Esophagus squamous epithelium (tissue), 5 donors: ENCODE measurements at regions of chr1 and their contacts with region 1.

Region 1: GRCh38 chr1:202184750-202185460 is 8.7 kb upstream of the LGR6 start:
- DNase-seq: no peak
- H3K4me3 ChIP-seq: no peak overlapping the region
- H3K27ac ChIP-seq: no peak overlapping the region
- H3K4me1 ChIP-seq: peaks cover 0 to 8% (median 0%) of the 10 kb centered on the region in 3 donors
- H3K27me3 ChIP-seq: peaks cover 0 to 96% (median 0%) of the 10 kb centered on the region in 4 donors
- CTCF ChIP-seq: peak; percentile 56 to 83 (median 71)
- POLR2A ChIP-seq: no peak

Region 2: GRCh38 chr1:202264300-202264699 is 79.4 kb after region 1 on chr1:
- intact Hi-C with region 1: no loop called
- DNase-seq: no peak
- H3K4me3 ChIP-seq: no peak overlapping the region
- H3K27ac ChIP-seq: no peak overlapping the region
- H3K4me1 ChIP-seq: peaks cover 0 to 5% (median 0%) of the 10 kb centered on the region in 3 donors
- H3K27me3 ChIP-seq: peaks cover 0 to 74% (median 2%) of the 10 kb centered on the region in 4 donors
- CTCF ChIP-seq: no peak
- POLR2A ChIP-seq: no peak

Region 3: GRCh38 chr1:202315576-202316168 is 130.8 kb after region 1 on chr1:
- intact Hi-C with region 1: loop called (anchors 5 kb)
- DNase-seq: no peak
- H3K4me3 ChIP-seq: no peak overlapping the region
- H3K27ac ChIP-seq: no peak overlapping the region
- H3K4me1 ChIP-seq: peaks cover 0 to 8% (median 3%) of the 10 kb centered on the region in 3 donors
- H3K27me3 ChIP-seq: peaks cover 0 to 81% (median 0%) of the 10 kb centered on the region in 4 donors
- CTCF ChIP-seq: peak; percentile 68 to 94 (median 89)
- POLR2A ChIP-seq: no peak

Region 4: DNA sequence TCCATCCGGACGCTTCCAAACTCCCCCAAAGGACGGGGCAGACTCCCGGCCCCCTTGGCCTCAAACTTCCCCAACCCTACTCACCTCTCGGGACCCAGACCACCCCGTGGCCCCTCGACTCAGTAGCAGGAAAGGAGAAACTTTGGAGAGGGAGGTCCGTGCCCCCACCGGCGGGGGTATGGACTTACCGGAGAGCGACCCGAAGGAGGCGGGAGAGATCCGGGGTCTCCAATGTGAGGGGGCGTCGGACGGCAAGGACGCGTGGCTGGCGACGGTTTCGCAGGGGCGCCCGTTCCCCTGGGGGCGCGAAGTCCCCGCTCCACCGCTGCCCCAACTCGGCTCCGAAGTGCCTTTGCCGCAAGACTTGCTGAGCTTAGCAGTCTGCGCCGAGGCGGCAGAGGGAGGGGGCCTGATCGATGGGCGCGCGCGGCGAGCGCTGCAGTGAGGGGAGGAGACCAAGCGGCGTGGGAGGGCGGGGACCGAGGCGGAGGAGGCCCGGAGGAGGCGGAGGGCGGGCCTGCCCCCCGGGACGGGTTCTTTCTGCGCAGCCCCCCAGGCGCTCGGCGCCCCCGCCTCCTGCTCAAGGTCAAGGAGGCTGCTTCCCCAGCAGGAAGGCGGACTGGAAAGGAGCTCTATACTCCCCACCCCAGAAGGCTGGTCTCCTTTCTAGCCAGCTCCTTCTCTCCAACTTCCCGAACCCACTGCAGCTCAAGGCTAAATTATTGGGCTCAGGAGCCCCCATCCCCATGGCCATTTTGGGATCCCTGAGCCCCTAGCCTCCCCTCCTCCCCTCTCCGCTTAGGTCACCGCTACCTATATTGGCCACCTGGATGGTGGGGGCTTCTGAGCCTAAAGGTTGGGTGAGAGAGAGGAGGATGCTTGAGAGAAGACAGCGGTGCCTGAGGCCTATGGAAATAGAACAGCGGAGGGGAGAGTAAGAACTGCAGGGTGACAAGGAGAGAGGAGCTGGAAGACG is 525.5 kb after region 1 on chr1 and contains the start of gene SYT2:
- intact Hi-C with region 1: loop called (anchors 10 kb)
- DNase-seq: no peak
- H3K4me3 ChIP-seq: peak within 1 kb of the TSS; percentile 9 to 54 (median 29)
- H3K27ac ChIP-seq: no peak within 1 kb of the TSS
- H3K4me1 ChIP-seq: peaks cover 11 to 28% (median 16%) of the 10 kb centered on the region in 3 donors
- H3K27me3 ChIP-seq: peaks cover 13 to 87% (median 19%) of the 10 kb centered on the region in 4 donors
- CTCF ChIP-seq: no peak
- POLR2A ChIP-seq: no peak
- total RNA-seq, gene SYT2: not detected